Activated CD4-positive, alpha-beta T cell treated with anti-CD3 and anti-CD28 coated beads, Interleukin-2, amount 10 ng/mL, durations not matched to agents 24 days and 14 days (primary cell): ENCODE measurements at regions of chr9 and their contacts with region 1.

Region 1: GRCh38 chr9:33076358-33077004 is at the start of gene SMU1:
- DNase-seq: peak; percentile 99
- H3K4me3 Mint-ChIP-seq: peak within 1 kb of the TSS; percentile 98
- H3K27ac Mint-ChIP-seq: peak within 1 kb of the TSS; percentile 97
- H3K4me1 Mint-ChIP-seq: peaks cover 19% of the 10 kb centered on the region
- H3K27me3 Mint-ChIP-seq: no peaks in the 10 kb centered on the region
- total RNA-seq, gene SMU1: 28.6 and 30.2 TPM in 2 replicates

Region 2: GRCh38 chr9:32550562-32551433 is 525.7 kb before region 1 on chr9:
- intact Hi-C with region 1: loop called (anchors 1 kb)
- DNase-seq: peak; percentile 98
- H3K4me3 Mint-ChIP-seq: peak overlapping the region; percentile 99
- H3K27ac Mint-ChIP-seq: peak overlapping the region; percentile 100
- H3K4me1 Mint-ChIP-seq: peaks cover 40% of the 10 kb centered on the region
- H3K27me3 Mint-ChIP-seq: no peaks in the 10 kb centered on the region

Region 3: GRCh38 chr9:33032865-33033264 is 43.6 kb before region 1 on chr9:
- intact Hi-C with region 1: no loop called
- DNase-seq: no peak
- H3K4me3 Mint-ChIP-seq: no peak overlapping the region
- H3K27ac Mint-ChIP-seq: no peak overlapping the region
- H3K4me1 Mint-ChIP-seq: peaks cover 39% of the 10 kb centered on the region
- H3K27me3 Mint-ChIP-seq: no peaks in the 10 kb centered on the region

Region 4: GRCh38 chr9:33116860-33117259 is 40.4 kb after region 1 on chr9:
- intact Hi-C with region 1: loop called (anchors 5 kb)
- DNase-seq: no peak
- H3K4me3 Mint-ChIP-seq: peak overlapping the region; percentile 40
- H3K27ac Mint-ChIP-seq: peak overlapping the region; percentile 67
- H3K4me1 Mint-ChIP-seq: peaks cover 27% of the 10 kb centered on the region
- H3K27me3 Mint-ChIP-seq: no peaks in the 10 kb centered on the region

Region 5: GRCh38 chr9:33202018-33202417 is 125.5 kb after region 1 on chr9:
- intact Hi-C with region 1: no loop called
- DNase-seq: no peak
- H3K4me3 Mint-ChIP-seq: peak overlapping the region; percentile 45
- H3K27ac Mint-ChIP-seq: peak overlapping the region; percentile 81
- H3K4me1 Mint-ChIP-seq: peaks cover 16% of the 10 kb centered on the region
- H3K27me3 Mint-ChIP-seq: peaks cover 21% of the 10 kb centered on the region

Region 6: GRCh38 chr9:33225319-33226149 is 149.1 kb after region 1 on chr9:
- intact Hi-C with region 1: loop called (anchors 1 kb)
- DNase-seq: peak; percentile 92
- H3K4me3 Mint-ChIP-seq: no peak overlapping the region
- H3K27ac Mint-ChIP-seq: peak overlapping the region; percentile 0
- H3K4me1 Mint-ChIP-seq: peaks cover 23% of the 10 kb centered on the region
- H3K27me3 Mint-ChIP-seq: peaks cover 3% of the 10 kb centered on the region

Region 7: GRCh38 chr9:33415501-33416038 is 339.1 kb after region 1 on chr9:
- intact Hi-C with region 1: loop called (anchors 5 kb)
- DNase-seq: peak; percentile 98
- H3K4me3 Mint-ChIP-seq: peak overlapping the region; percentile 69
- H3K27ac Mint-ChIP-seq: peak overlapping the region; percentile 94
- H3K4me1 Mint-ChIP-seq: peaks cover 50% of the 10 kb centered on the region
- H3K27me3 Mint-ChIP-seq: peaks cover 2% of the 10 kb centered on the region